ENCODE measurements at regions of chr19 and their contacts with region 1.

Region 1: DNA sequence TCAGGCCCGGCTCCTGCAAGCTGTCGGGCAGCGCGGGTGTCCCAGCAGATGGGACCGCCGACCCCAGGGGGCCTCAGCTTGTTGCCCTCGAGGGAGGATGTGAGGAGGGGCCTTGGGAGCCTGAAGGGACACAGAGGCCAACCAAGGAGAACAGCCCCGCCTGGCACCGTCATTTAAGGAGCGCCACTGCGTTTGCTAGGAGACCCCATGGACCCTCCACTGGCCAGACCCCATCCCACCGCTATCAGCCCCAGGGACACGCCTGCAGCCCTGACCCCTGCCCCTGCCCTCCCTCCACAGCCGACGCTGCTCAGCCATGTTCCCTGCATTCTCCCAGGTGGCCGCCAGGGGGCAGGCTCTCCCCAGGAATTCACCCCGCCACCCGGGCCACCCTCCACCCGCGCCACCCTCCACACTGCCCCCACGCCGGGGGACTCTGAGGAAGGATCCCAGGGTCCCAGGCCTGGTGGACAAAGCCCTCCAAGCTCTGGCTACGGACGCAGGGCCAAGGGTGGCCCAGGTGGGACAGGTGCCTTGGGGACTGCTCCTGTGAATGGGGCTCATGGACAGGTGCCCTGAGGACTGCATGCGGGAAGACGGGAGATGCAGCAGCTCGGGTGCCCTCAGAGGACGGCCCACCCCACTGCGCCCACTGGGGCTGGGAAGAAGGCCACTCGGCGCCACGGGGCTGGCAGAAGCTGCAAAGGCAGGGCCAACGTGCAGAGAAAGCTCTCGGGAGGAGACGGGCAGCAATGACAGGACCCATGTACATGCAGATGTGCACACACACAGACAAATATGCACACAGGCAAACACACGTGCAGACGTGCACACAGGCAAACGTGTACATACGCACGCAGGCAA is 34.4 kb downstream of the PIP5K1C start:
- DNase-seq: peak; percentile 80
- ATAC-seq: peak; percentile 87
- H3K4me3 Mint-ChIP-seq: no peak overlapping the region
- H3K27ac Mint-ChIP-seq: no peak overlapping the region
- H3K4me1 Mint-ChIP-seq: peaks cover 25% of the 10 kb centered on the region
- H3K27me3 Mint-ChIP-seq: no peaks in the 10 kb centered on the region
- CTCF ChIP-seq: peak; percentile 87

Region 2: GRCh38 chr19:3700221-3701032 is 34.5 kb after region 1 on chr19 and contains the start of gene PIP5K1C:
- CTCF ChIA-PET with region 1: interaction called, 32 read pairs
- POLR2A ChIA-PET with region 1: interaction called, 4 read pairs
- intact Hi-C with region 1: loop called (anchors 2 kb)
- DNase-seq: peak; percentile 95
- ATAC-seq: peak; percentile 99
- H3K4me3 Mint-ChIP-seq: peak within 1 kb of the TSS; percentile 92
- H3K27ac Mint-ChIP-seq: peak within 1 kb of the TSS; percentile 79
- H3K4me1 Mint-ChIP-seq: peaks cover 15% of the 10 kb centered on the region
- H3K27me3 Mint-ChIP-seq: peaks cover 2% of the 10 kb centered on the region
- CTCF ChIP-seq: peak; percentile 76
- total RNA-seq, gene PIP5K1C: 20.4 to 22.2 TPM

Measured in activated CD8-positive, alpha-beta T cell treated with anti-CD3 and anti-CD28 coated beads for 36 hours (primary cell).